SK-N-SH (cell line): ENCODE measurements at regions of chr5 and their contacts with region 1.

Region 1: GRCh38 chr5:169302491-169303118 is 1.7 kb upstream of the SLIT3 start:
- DNase-seq: peak; percentile 69
- H3K4me3 ChIP-seq: peak overlapping the region in 1 of 2 experiments; percentile 18; a peak in 1 of 4 replicates
- H3K27ac ChIP-seq: peak overlapping the region; percentile 46 to 80; a peak in 2 of 4 replicates
- H3K4me1 ChIP-seq: peaks cover 10 to 31% of the 10 kb centered on the region in 2 experiments; a peak in 2 of 4 replicates
- H3K27me3 ChIP-seq: no peaks in the 10 kb centered on the region
- CTCF ChIP-seq: peak; percentile 96
- EP300 ChIP-seq: no peak
- RAD21 ChIP-seq: peak; percentile 91

Region 2: DNA sequence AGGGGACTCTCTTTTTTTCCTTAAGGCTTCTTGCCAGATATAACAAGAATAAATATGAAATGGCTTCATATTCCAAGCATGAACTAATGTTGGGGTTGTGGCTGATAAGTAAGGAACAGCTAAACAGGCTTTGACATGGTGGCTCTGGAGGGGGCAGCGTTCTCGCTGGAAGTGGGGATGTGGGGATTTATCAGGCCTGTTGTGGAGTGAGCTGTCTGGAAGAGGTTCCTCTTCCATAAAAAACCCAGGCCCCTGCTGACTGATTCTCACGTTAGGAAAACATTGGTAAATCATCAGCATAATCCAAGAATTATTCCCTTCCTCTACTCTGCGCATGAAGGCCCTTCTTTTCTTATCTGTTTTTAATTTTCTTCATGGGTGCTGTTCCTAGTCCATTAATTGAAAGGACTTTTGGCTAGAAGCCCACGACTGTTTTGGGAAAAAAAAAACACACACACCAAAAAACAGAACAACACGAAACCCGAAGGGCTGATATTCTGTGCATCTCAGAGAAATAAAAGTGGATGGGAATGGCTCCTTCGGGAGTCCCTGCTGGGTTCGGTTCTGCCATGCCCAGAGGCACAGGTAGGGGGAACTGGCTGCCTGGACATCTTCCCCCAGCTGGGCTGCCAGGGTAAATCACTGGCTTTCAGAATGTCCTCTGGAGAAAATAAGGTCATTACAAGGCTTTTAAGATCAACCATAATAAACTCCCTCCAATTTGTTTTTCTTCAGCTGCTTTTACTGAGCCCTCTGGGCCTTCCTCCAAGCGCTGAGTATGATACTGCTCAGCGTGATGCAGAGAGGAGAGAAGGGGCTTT is 298.7 kb before region 1 on chr5:
- CTCF ChIA-PET with region 1: interaction called, 14 read pairs
- POLR2A ChIA-PET with region 1: no interaction called
- DNase-seq: peak; percentile 72
- H3K4me3 ChIP-seq: 0 out of 4 replicates have a peak overlapping the region, but pooled peaks of 1 of the 2 experiments have one; percentile 1
- H3K27ac ChIP-seq: peak overlapping the region; percentile 86 to 98
- H3K4me1 ChIP-seq: peaks cover 23 to 53% of the 10 kb centered on the region in 2 experiments
- H3K27me3 ChIP-seq: no peaks in the 10 kb centered on the region
- CTCF ChIP-seq: peak; percentile 57
- EP300 ChIP-seq: peak; percentile 10 to 75; a peak in 1 of 4 replicates
- RAD21 ChIP-seq: peak; percentile 78

Region 3: GRCh38 chr5:169176709-169177694 is 125.6 kb before region 1 on chr5:
- CTCF ChIA-PET with region 1: interaction called, 16 read pairs
- POLR2A ChIA-PET with region 1: no interaction called
- DNase-seq: peak; percentile 62
- H3K4me3 ChIP-seq: no peak overlapping the region
- H3K27ac ChIP-seq: peak overlapping the region in 1 of 2 experiments; percentile 95; a peak in 2 of 4 replicates
- H3K4me1 ChIP-seq: peaks cover 0 to 45% of the 10 kb centered on the region in 2 experiments; a peak in 2 of 4 replicates
- H3K27me3 ChIP-seq: no peaks in the 10 kb centered on the region
- CTCF ChIP-seq: no peak
- EP300 ChIP-seq: peak in 1 of 2 experiments; percentile 98; a peak in 2 of 4 replicates
- RAD21 ChIP-seq: peak; percentile 24

Region 4: GRCh38 chr5:169289520-169289919 is 13.1 kb before region 1 on chr5:
- CTCF ChIA-PET with region 1: interaction called, 24 read pairs
- POLR2A ChIA-PET with region 1: no interaction called
- DNase-seq: no peak
- H3K4me3 ChIP-seq: no peak overlapping the region
- H3K27ac ChIP-seq: no peak overlapping the region
- H3K4me1 ChIP-seq: peaks cover 0 to 28% of the 10 kb centered on the region in 2 experiments; a peak in 2 of 4 replicates
- H3K27me3 ChIP-seq: no peaks in the 10 kb centered on the region
- CTCF ChIP-seq: no peak; the same call in 1 of the 2 replicates
- EP300 ChIP-seq: no peak
- RAD21 ChIP-seq: peak; percentile 22; the same call in 1 of the 2 replicates

Region 5: GRCh38 chr5:169339869-169340268 is 37.3 kb after region 1 on chr5:
- CTCF ChIA-PET with region 1: no interaction called
- POLR2A ChIA-PET with region 1: no interaction called
- DNase-seq: no peak
- H3K4me3 ChIP-seq: no peak overlapping the region
- H3K27ac ChIP-seq: no peak overlapping the region
- H3K4me1 ChIP-seq: peaks cover 0 to 22% of the 10 kb centered on the region in 2 experiments; a peak in 2 of 4 replicates
- H3K27me3 ChIP-seq: no peaks in the 10 kb centered on the region
- CTCF ChIP-seq: no peak
- EP300 ChIP-seq: no peak
- RAD21 ChIP-seq: no peak

Region 6: GRCh38 chr5:169416583-169417196 is 114.1 kb after region 1 on chr5:
- CTCF ChIA-PET with region 1: no interaction called
- POLR2A ChIA-PET with region 1: no interaction called
- DNase-seq: no peak
- H3K4me3 ChIP-seq: no peak overlapping the region
- H3K27ac ChIP-seq: no peak overlapping the region
- H3K4me1 ChIP-seq: peaks cover 0 to 9% of the 10 kb centered on the region in 2 experiments; a peak in 2 of 4 replicates
- H3K27me3 ChIP-seq: no peaks in the 10 kb centered on the region
- CTCF ChIP-seq: no peak
- EP300 ChIP-seq: no peak
- RAD21 ChIP-seq: no peak

Region 7: DNA sequence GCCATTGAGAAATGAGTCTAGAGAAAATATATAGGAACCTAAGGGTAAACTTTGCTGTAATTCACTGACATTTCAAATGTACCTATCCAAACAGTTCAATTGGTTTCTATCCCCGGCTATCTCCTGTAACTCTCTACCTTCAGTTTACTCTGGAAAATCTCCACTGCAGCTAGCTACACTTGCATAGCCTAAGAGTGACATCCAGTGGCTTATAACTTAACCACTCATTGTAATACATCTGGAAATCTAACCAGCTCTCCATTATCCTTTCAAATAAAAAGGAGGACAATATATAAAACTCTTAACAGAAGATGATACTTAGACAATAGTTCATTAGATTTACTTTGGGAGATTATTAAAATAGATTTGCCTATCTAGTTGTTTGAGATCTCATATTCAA is 245.7 kb after region 1 on chr5:
- CTCF ChIA-PET with region 1: interaction called, 13 read pairs
- POLR2A ChIA-PET with region 1: no interaction called
- DNase-seq: peak; percentile 35
- H3K4me3 ChIP-seq: no peak overlapping the region
- H3K27ac ChIP-seq: peak overlapping the region in 1 of 2 experiments; percentile 81; a peak in 2 of 4 replicates
- H3K4me1 ChIP-seq: peaks cover 0 to 23% of the 10 kb centered on the region in 2 experiments; a peak in 2 of 4 replicates
- H3K27me3 ChIP-seq: no peaks in the 10 kb centered on the region
- CTCF ChIP-seq: peak; percentile 76
- EP300 ChIP-seq: 0 out of 4 replicates have a peak, but pooled peaks of 1 of the 2 experiments have one; percentile 20
- RAD21 ChIP-seq: peak; percentile 99